Aorta (tissue), 5 donors: ENCODE measurements at regions of chr2 and their contacts with region 1.

Region 1: GRCh38 chr2:44291281-44292248 is 16.3 kb downstream of the SLC3A1 start:
- DNase-seq: peak in 1 of 2 donors; percentile 60
- ATAC-seq: peak; percentile 88
- H3K4me3 ChIP-seq: no peak overlapping the region
- H3K27ac ChIP-seq: peak overlapping the region in 1 of 2 donors; percentile 21
- H3K4me1 ChIP-seq: peaks cover 0 to 6% of the 10 kb centered on the region in 2 donors
- H3K27me3 ChIP-seq: no peaks in the 10 kb centered on the region

Region 2: DNA sequence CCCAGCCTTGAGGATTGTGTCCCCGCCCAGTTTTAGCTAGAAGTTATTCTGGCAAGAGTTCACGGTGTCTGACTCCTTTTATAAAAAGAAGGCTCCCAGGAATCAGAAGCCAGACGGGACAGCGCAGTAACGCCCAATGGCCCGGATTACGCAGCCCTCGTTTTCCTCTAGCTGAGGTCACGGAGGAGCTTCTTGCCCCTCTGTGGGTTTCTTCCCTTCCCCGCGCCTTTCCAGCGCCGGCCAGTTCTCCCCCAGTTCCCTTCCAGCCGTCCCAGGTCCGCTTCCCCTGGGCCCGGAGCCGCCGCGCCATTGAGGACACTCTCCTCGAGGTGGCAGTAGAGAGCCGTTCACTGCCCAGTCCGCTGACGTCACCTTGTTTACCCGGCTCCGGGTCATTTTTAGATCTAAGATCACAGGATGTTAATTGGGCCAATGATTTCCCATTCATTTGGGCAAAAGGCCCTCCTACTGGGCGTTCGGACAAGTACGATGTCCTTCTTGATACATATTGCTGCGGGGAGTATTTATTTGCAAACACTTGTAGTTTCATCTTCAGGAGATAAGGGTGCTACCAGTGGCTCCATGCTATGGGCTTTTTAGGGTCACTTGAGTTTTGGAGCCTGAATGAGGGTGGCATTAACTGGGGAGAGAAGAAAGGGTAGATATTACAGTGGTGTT is 204.4 kb before region 1 on chr2:
- intact Hi-C with region 1: loop called in 1 of 2 experiments (anchors 2 kb)
- DNase-seq: peak; percentile 91 to 95
- ATAC-seq: peak; percentile 98
- H3K4me3 ChIP-seq: peak overlapping the region in 1 of 2 donors; percentile 42
- H3K27ac ChIP-seq: peak overlapping the region; percentile 4 to 17
- H3K4me1 ChIP-seq: no peaks in the 10 kb centered on the region
- H3K27me3 ChIP-seq: no peaks in the 10 kb centered on the region

Region 3: DNA sequence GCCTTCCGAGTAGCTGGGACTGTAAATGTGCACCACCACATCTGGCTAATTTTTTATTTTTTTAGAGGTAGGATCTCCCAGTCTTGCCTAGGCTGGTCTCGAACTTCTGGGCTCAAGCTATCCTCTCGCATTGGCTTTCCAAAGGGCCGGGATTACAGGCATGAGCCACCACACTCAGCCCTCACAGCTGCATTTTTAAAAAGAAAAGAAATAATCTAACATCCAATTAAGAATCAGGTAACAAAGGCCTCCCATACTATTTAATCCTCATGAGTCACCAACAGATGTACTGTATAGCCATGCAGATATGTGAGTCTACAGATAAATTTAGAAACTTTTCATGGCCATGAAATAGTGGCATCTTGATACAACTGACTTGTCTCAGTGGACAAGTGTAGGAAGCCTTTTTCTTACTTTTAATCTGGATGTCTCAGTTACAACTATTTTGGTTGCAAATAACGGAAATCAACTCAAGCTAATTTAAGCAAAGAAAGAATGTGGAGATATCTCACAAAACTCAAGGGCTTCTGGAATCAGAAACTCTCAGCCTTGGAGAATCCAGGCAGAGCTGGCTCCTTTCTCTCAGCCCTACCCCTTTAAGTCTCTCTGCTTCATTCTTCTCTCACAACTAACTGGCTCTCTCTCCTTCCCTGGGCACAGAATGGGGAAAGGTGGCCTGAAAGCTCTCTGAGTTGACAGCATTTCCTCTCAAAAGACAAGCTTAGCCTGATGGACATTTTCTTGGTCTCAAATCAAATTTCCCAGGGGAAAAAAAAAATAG is 135.7 kb before region 1 on chr2:
- intact Hi-C with region 1: no loop called
- DNase-seq: no peak
- ATAC-seq: no peak
- H3K4me3 ChIP-seq: no peak overlapping the region
- H3K27ac ChIP-seq: peak overlapping the region in 1 of 2 donors; percentile 45
- H3K4me1 ChIP-seq: no peaks in the 10 kb centered on the region
- H3K27me3 ChIP-seq: no peaks in the 10 kb centered on the region

Region 4: GRCh38 chr2:44233450-44234128 is 58.0 kb before region 1 on chr2:
- intact Hi-C with region 1: loop called in 1 of 2 experiments (anchors 5 kb)
- DNase-seq: no peak
- ATAC-seq: no peak
- H3K4me3 ChIP-seq: no peak overlapping the region
- H3K27ac ChIP-seq: no peak overlapping the region
- H3K4me1 ChIP-seq: no peaks in the 10 kb centered on the region
- H3K27me3 ChIP-seq: no peaks in the 10 kb centered on the region